ENCODE measurements at regions of chr6 and their contacts with region 1.

Region 1: GRCh38 chr6:138817822-138818308 is 22.0 kb downstream of the ECT2L start:
- DNase-seq: no peak
- ATAC-seq: no peak
- H3K4me3 ChIP-seq: no peak overlapping the region
- H3K4me3 Mint-ChIP-seq: no peak overlapping the region
- H3K27ac ChIP-seq: no peak overlapping the region
- H3K27ac Mint-ChIP-seq: no peak overlapping the region
- H3K4me1 ChIP-seq: no peaks in the 10 kb centered on the region
- H3K4me1 Mint-ChIP-seq: no peaks in the 10 kb centered on the region
- H3K27me3 ChIP-seq: no peaks in the 10 kb centered on the region
- H3K27me3 Mint-ChIP-seq: no peaks in the 10 kb centered on the region
- CTCF ChIP-seq: no peak

Region 2: GRCh38 chr6:138803861-138804260 is 14.0 kb before region 1 on chr6:
- CTCF ChIA-PET with region 1: interaction called, 12 read pairs
- POLR2A ChIA-PET with region 1: no interaction called
- intact Hi-C with region 1: no loop called
- DNase-seq: no peak
- ATAC-seq: no peak
- H3K4me3 ChIP-seq: no peak overlapping the region
- H3K4me3 Mint-ChIP-seq: no peak overlapping the region
- H3K27ac ChIP-seq: no peak overlapping the region
- H3K27ac Mint-ChIP-seq: no peak overlapping the region
- H3K4me1 ChIP-seq: no peaks in the 10 kb centered on the region
- H3K4me1 Mint-ChIP-seq: no peaks in the 10 kb centered on the region
- H3K27me3 ChIP-seq: no peaks in the 10 kb centered on the region
- H3K27me3 Mint-ChIP-seq: peaks cover 8% of the 10 kb centered on the region
- CTCF ChIP-seq: no peak

Region 3: GRCh38 chr6:139050770-139051313 is 233.0 kb after region 1 on chr6:
- CTCF ChIA-PET with region 1: no interaction called
- POLR2A ChIA-PET with region 1: no interaction called
- intact Hi-C with region 1: loop called in 1 of 2 experiments (anchors 1 kb)
- DNase-seq: peak in 2 of 9 experiments; percentile 14 to 24
- ATAC-seq: no peak
- H3K4me3 ChIP-seq: no peak overlapping the region
- H3K4me3 Mint-ChIP-seq: no peak overlapping the region
- H3K27ac ChIP-seq: no peak overlapping the region
- H3K27ac Mint-ChIP-seq: no peak overlapping the region
- H3K4me1 ChIP-seq: no peaks in the 10 kb centered on the region
- H3K4me1 Mint-ChIP-seq: no peaks in the 10 kb centered on the region
- H3K27me3 ChIP-seq: no peaks in the 10 kb centered on the region
- H3K27me3 Mint-ChIP-seq: no peaks in the 10 kb centered on the region
- CTCF ChIP-seq: no peak

Region 4: GRCh38 chr6:139173172-139173571 is 355.3 kb after region 1 on chr6:
- CTCF ChIA-PET with region 1: no interaction called
- POLR2A ChIA-PET with region 1: no interaction called
- intact Hi-C with region 1: loop called in 1 of 2 experiments (anchors 2 kb)
- DNase-seq: peak in 4 of 9 experiments; percentile 32 to 74 (median 50)
- ATAC-seq: peak; percentile 84
- H3K4me3 ChIP-seq: no peak overlapping the region
- H3K4me3 Mint-ChIP-seq: peak overlapping the region; percentile 40
- H3K27ac ChIP-seq: peak overlapping the region in 1 of 2 experiments; percentile 34
- H3K27ac Mint-ChIP-seq: peak overlapping the region; percentile 80
- H3K4me1 ChIP-seq: peaks cover 92% of the 10 kb centered on the region
- H3K4me1 Mint-ChIP-seq: peaks cover 93% of the 10 kb centered on the region
- H3K27me3 ChIP-seq: no peaks in the 10 kb centered on the region
- H3K27me3 Mint-ChIP-seq: no peaks in the 10 kb centered on the region
- CTCF ChIP-seq: no peak

Measured in CD8-positive, alpha-beta T cell (primary cell).